ENCODE measurements at regions of chr15 and their contacts with region 1.

Region 1: DNA sequence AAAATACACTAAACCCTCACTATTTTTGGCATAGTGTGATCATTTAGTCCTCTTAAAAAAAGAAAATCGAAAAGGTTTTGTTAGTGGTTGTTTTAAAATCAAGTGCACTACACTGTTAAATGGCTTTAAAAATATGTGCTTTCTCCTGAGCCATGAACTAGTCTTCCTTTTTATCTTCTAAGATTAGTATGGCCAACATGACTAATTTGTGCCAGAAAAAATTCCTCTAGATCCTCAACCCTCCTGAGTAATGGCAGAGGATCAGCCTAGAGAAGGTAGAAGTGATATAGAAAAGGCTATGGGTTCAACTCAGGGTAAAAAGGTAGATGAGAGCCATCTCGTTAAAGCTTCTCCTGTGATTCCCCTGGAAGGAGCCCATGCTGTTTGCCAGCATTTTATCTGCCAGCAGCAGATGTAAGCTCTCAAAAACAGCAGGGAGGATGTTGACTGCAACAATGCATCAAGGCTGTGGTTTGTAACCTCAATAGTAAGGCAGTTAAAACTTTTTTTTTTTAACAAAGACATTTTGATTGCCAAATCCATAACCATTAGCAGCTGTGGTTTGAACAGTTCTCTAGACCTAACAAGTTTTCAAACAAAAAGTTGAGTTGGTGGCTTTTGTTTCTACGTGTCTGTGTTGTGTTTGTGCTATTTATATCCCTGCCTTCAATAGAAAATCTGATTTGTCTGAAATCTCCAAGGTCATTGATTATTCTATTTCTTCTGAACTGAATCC is 30.2 kb upstream of the ZNF609 start:
- DNase-seq: peak; percentile 93
- ATAC-seq: peak; percentile 66
- H3K4me3 ChIP-seq: no peak overlapping the region
- H3K27ac ChIP-seq: no peak overlapping the region; the same call in 1 of the 2 replicates
- H3K4me1 ChIP-seq: peaks cover 4% of the 10 kb centered on the region; the same call in 1 of the 2 replicates
- H3K27me3 ChIP-seq: no peaks in the 10 kb centered on the region
- CTCF ChIP-seq: no peak
- POLR2A ChIP-seq: no peak
- RAD21 ChIP-seq: no peak

Region 2: DNA sequence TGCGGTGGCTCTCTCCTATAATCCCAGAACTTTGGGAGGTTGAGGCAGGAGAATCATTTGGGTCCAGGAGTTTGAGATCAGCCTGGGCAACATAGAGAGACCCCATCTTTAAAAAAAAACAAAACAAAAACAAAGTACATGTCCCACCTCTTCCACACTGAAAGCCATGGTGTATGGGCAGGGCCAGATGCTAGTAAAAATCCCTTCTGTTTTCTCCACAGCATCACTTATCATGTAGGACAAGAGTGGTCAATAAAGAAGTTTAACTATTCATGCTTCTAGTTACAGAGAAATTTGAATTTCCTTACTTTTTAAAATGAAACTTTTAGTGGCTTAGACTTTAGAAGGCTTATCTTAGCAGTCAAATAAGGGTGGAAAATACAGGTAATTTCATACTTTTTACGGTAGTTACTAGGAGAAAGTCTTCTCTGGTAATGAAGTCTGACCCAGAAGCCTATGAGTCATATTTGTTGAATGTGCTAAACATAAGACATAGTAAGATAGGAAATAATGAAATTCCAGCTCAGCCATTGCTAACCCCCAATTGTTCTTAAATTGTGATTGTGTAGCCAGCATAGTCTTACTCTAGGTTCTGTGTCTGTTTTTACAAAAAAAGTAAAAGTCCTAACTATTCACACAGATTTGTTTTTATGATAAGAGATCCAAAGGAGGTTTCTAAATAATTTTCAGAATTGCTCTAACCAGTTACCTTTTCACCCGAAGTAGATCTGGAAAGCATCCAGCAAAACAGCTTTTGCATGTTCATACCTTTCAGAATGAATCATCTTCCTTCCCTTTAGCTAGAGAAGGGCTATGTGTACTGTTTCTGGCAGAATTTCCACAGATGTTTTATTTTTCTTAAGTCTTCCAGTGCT is 13.8 kb after region 1 on chr15:
- CTCF ChIA-PET with region 1: interaction called, 10 read pairs
- POLR2A ChIA-PET with region 1: no interaction called
- dilution Hi-C with region 1: no loop called
- in situ Hi-C with region 1: no loop called
- intact Hi-C with region 1: no loop called
- DNase-seq: peak; percentile 92
- ATAC-seq: peak; percentile 92
- H3K4me3 ChIP-seq: no peak overlapping the region; the same call in 1 of the 2 replicates
- H3K27ac ChIP-seq: peak overlapping the region; percentile 85
- H3K4me1 ChIP-seq: peaks cover 8% of the 10 kb centered on the region
- H3K27me3 ChIP-seq: no peaks in the 10 kb centered on the region
- CTCF ChIP-seq: no peak
- POLR2A ChIP-seq: no peak
- RAD21 ChIP-seq: no peak

Region 3: DNA sequence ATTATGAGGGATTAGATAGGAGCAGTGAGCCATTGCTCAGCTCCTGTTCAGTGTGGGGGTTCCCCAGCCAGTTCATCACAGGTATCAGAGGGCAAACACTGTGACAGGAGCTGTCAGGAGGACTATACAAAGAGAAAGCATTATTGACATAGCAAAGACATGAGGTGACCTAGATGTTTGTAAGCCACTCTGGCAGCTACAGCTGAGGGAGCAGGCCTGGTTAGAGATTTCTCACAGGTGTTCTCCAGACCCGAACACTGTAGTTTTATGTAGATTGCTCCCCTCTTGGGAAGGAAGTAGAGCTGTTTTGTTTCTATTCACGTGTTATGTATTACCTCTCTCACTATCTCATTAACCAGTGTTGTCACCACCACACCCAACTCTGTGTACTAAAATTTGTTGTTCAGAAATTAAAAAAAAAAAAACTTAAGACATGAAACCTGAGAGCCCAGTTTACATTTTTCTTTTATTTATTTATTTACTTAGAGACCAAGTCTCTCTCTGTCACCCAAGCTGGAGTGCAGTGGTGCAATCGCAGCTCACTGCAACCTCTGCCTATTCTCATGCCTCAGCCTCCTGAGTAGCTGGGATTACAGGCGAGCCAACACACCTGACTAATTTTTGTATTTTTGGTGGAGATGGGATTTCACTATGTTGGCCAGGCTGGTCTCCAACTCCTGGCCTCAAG is 221.5 kb after region 1 on chr15:
- CTCF ChIA-PET with region 1: interaction called, 5 read pairs
- POLR2A ChIA-PET with region 1: no interaction called
- dilution Hi-C with region 1: no loop called
- in situ Hi-C with region 1: no loop called
- intact Hi-C with region 1: loop called (anchors 1 kb)
- DNase-seq: peak; percentile 33
- ATAC-seq: peak; percentile 61
- H3K4me3 ChIP-seq: no peak overlapping the region
- H3K27ac ChIP-seq: no peak overlapping the region
- H3K4me1 ChIP-seq: peaks cover 7% of the 10 kb centered on the region
- H3K27me3 ChIP-seq: no peaks in the 10 kb centered on the region
- CTCF ChIP-seq: no peak
- POLR2A ChIP-seq: no peak
- RAD21 ChIP-seq: no peak

Region 4: DNA sequence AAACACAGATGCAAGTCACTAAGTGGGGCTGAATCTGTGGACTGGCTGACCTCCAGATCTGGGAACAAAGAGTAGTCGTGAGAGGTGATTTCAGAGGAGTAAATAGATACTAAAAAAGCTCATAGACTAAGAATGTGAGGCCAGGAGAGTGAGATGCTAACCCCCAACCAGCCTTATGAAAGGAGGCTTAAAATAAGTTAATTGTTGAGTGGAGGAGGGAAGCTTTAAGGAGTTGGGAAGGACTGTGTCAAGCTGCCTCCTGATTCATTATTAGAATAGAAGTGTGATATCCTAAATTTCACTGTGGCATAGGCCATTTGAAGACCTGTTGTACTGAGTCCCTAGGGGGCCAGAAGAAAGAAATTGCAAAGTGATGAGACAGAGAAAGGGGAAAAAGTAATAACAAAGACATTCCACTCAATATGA is 237.6 kb after region 1 on chr15:
- CTCF ChIA-PET with region 1: no interaction called
- POLR2A ChIA-PET with region 1: interaction called, 3 read pairs
- dilution Hi-C with region 1: no loop called
- in situ Hi-C with region 1: loop called (anchors 5 kb)
- intact Hi-C with region 1: no loop called
- DNase-seq: peak; percentile 86
- ATAC-seq: peak; percentile 75
- H3K4me3 ChIP-seq: no peak overlapping the region
- H3K27ac ChIP-seq: no peak overlapping the region
- H3K4me1 ChIP-seq: no peaks in the 10 kb centered on the region; the same call in 1 of the 2 replicates
- H3K27me3 ChIP-seq: no peaks in the 10 kb centered on the region
- CTCF ChIP-seq: no peak
- POLR2A ChIP-seq: no peak
- RAD21 ChIP-seq: no peak

Region 5: GRCh38 chr15:64681424-64682024 is 251.4 kb after region 1 on chr15:
- CTCF ChIA-PET with region 1: interaction called, 3 read pairs
- POLR2A ChIA-PET with region 1: no interaction called
- dilution Hi-C with region 1: no loop called
- in situ Hi-C with region 1: no loop called
- intact Hi-C with region 1: loop called (anchors 1 kb)
- DNase-seq: peak; percentile 65
- ATAC-seq: peak; percentile 83
- H3K4me3 ChIP-seq: no peak overlapping the region
- H3K27ac ChIP-seq: no peak overlapping the region
- H3K4me1 ChIP-seq: peaks cover 3% of the 10 kb centered on the region; the same call in 1 of the 2 replicates
- H3K27me3 ChIP-seq: no peaks in the 10 kb centered on the region
- CTCF ChIP-seq: peak; percentile 92
- POLR2A ChIP-seq: no peak
- RAD21 ChIP-seq: peak; percentile 84

Region 6: DNA sequence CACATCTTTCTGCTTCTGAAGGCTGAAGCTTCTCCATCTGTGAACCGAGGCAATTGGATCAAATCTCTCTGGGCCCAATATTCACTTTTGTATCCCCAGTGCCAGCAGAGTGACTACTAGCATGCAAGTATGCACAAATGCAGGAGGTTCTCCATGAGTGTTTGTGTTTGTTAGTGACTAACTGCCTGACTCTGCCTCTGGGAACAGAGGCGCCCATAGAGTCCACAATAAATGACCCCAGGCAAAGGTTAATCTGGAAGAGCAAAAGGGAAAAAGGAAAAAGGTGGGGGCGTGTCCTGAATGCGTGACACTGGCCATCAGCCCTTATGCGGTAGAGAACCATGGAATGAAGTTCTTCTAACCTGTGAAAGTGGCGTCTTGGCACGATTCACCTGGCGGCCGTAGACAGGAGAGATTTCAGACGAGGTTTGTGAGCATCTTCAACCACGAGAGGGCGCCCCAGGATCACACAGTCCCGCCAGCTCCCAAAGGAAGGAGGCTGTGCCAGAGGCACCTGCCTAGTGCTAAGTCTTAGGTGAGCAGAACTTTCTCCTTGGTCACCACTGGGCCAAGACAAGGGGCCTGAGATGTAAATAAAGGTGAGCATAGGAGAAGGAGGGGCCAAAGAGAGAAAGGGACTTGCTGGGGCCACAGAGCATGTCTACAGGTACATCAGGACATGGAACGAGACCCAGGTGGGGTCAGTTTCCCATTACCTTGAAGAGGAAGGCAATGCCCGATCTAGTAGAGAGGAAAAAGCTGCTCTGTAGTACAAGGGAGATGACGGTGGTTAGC is 301.0 kb after region 1 on chr15:
- CTCF ChIA-PET with region 1: no interaction called
- POLR2A ChIA-PET with region 1: no interaction called
- dilution Hi-C with region 1: no loop called
- in situ Hi-C with region 1: no loop called
- intact Hi-C with region 1: loop called (anchors 5 kb)
- DNase-seq: peak; percentile 59
- ATAC-seq: peak; percentile 80
- H3K4me3 ChIP-seq: no peak overlapping the region
- H3K27ac ChIP-seq: no peak overlapping the region
- H3K4me1 ChIP-seq: no peaks in the 10 kb centered on the region
- H3K27me3 ChIP-seq: no peaks in the 10 kb centered on the region
- CTCF ChIP-seq: peak; percentile 92
- POLR2A ChIP-seq: 0 out of 2 replicates have a peak, but pooled peaks have one; percentile 29
- RAD21 ChIP-seq: peak; percentile 96